K562 (cell line): ENCODE measurements at regions of chr9 and their contacts with region 1.

Region 1: GRCh38 chr9:112333639-112334431 is 416 bp upstream of the PTBP3 start:
- DNase-seq: peak; percentile 96 to 98 (median 97)
- ATAC-seq: peak; percentile 79
- H3K4me3 ChIP-seq: peak overlapping the region; percentile 90
- H3K27ac ChIP-seq: peak overlapping the region; percentile 96
- H3K4me1 ChIP-seq: peaks cover 2 to 7% of the 10 kb centered on the region in 2 experiments; a peak in 3 of 5 replicates
- H3K27me3 ChIP-seq: no peaks in the 10 kb centered on the region
- CTCF ChIP-seq: peak; percentile 54 to 74 (median 57); a peak in 5 of 6 replicates
- EP300 ChIP-seq: 0 out of 2 replicates have a peak, but pooled peaks have one; percentile 3
- POLR2A ChIP-seq: no peak; the same call in none of the 2 replicates
- RAD21 ChIP-seq: peak; percentile 37 to 47

Region 2: GRCh38 chr9:112002131-112002846 is 331.5 kb before region 1 on chr9:
- CTCF ChIA-PET with region 1: no interaction called
- POLR2A ChIA-PET with region 1: no interaction called
- in situ Hi-C with region 1: no loop called
- intact Hi-C with region 1: loop called (anchors 10 kb)
- DNase-seq: no peak
- ATAC-seq: no peak
- H3K4me3 ChIP-seq: no peak overlapping the region
- H3K27ac ChIP-seq: no peak overlapping the region
- H3K4me1 ChIP-seq: peaks cover 3% of the 10 kb centered on the region in 2 experiments; a peak in 2 of 5 replicates
- H3K27me3 ChIP-seq: no peaks in the 10 kb centered on the region
- CTCF ChIP-seq: no peak
- EP300 ChIP-seq: no peak
- POLR2A ChIP-seq: no peak
- RAD21 ChIP-seq: no peak

Region 3: DNA sequence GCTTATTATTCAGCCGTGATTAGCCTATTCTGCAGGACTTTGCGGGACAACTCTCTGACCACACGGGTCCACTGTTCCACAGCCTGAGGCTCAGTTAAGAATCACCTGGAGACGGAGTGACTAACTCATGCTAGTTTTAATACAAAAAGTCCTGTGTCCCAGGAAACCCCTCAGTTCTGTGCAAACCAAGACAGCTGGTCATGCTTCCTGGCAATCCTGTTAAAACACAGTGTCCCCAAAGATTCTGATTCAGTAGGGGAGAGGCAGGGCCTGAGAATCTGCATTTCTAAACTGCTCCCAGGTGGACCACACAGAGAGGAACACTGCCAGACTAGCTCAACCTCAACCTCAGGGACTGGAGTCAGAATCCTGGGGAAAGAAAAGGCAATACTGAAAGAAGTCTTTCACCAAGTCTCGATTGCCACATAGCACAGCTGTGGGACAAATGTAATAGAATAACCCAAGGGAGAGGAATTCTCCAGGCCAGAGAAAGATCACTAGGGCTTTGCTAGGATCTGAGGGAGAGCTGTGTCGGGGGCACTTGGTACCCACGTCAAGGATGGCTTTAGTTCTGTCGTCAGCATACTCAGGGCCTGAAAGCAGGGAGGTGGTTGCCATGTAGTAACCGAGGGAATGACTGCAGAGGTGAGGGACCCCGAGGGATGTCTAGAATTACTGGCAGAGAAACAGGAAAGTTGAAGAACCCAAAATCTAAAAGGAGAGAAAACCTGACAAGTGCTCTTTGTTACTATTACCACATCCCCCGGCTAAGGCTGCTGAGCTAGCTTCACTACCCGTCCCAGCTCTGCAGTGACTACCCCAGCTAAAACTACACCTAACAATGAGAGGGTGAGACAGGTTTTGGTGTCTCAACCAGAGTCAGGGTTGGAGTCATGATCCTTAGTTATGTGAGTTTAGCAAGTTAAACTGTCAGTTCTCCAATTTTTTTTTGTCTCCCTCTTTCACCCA is 167.4 kb before region 1 on chr9:
- CTCF ChIA-PET with region 1: no interaction called
- POLR2A ChIA-PET with region 1: no interaction called
- in situ Hi-C with region 1: no loop called
- intact Hi-C with region 1: loop called (anchors 2 kb)
- DNase-seq: peak in 2 of 4 experiments; percentile 39 to 60
- ATAC-seq: peak; percentile 78
- H3K4me3 ChIP-seq: no peak overlapping the region
- H3K27ac ChIP-seq: peak overlapping the region; percentile 39; the same call in 1 of the 3 replicates
- H3K4me1 ChIP-seq: peaks cover 3 to 32% of the 10 kb centered on the region in 2 experiments
- H3K27me3 ChIP-seq: no peaks in the 10 kb centered on the region
- CTCF ChIP-seq: peak; percentile 49 to 67 (median 50); a peak in 5 of 6 replicates
- EP300 ChIP-seq: no peak
- POLR2A ChIP-seq: no peak
- RAD21 ChIP-seq: peak; percentile 38 to 61; a peak in 3 of 4 replicates

Region 4: GRCh38 chr9:112271466-112272092 is 62.3 kb before region 1 on chr9:
- CTCF ChIA-PET with region 1: no interaction called
- POLR2A ChIA-PET with region 1: interaction called, 3 read pairs
- in situ Hi-C with region 1: no loop called
- intact Hi-C with region 1: loop called (anchors 5 kb)
- DNase-seq: no peak
- ATAC-seq: no peak
- H3K4me3 ChIP-seq: no peak overlapping the region
- H3K27ac ChIP-seq: no peak overlapping the region
- H3K4me1 ChIP-seq: no peaks in the 10 kb centered on the region; a peak in 1 of 5 replicates
- H3K27me3 ChIP-seq: no peaks in the 10 kb centered on the region
- CTCF ChIP-seq: no peak
- EP300 ChIP-seq: no peak
- POLR2A ChIP-seq: no peak
- RAD21 ChIP-seq: no peak

Region 5: GRCh38 chr9:112379177-112380101 is 45.6 kb after region 1 on chr9:
- CTCF ChIA-PET with region 1: no interaction called
- POLR2A ChIA-PET with region 1: interaction called, 11 read pairs
- in situ Hi-C with region 1: no loop called
- intact Hi-C with region 1: no loop called
- DNase-seq: peak; percentile 98 to 99 (median 98)
- ATAC-seq: peak; percentile 91
- H3K4me3 ChIP-seq: peak overlapping the region; percentile 80
- H3K27ac ChIP-seq: peak overlapping the region; percentile 93
- H3K4me1 ChIP-seq: peaks cover 14 to 25% of the 10 kb centered on the region in 2 experiments
- H3K27me3 ChIP-seq: no peaks in the 10 kb centered on the region
- CTCF ChIP-seq: peak in 2 of 3 experiments; percentile 17 to 18; a peak in 2 of 6 replicates
- EP300 ChIP-seq: no peak; the same call in none of the 2 replicates
- POLR2A ChIP-seq: peak; percentile 98
- RAD21 ChIP-seq: 0 out of 4 replicates have a peak, but pooled peaks of 1 of the 2 experiments have one; percentile 25

Region 6: DNA sequence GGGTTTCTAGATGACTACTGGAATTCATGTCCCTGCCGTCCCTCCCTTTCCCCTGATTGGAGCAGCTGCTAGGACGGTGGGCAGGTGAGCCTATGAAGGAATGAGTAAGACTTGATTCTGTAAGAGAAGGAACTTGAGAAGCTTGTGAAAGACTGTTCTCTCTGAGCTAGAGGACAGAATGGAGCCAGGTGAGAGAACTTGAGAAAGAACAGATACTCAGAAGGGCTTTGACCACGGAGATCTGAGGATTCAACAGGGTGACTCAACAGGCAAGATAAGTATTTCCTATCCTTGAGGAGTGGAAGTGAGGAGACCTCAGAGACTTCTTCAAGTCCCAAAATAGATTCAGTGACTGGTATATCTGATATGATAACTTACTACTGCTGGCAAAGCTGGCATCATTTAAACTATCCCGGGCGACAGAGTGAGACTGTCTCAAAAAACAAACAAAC is 88.0 kb after region 1 on chr9:
- CTCF ChIA-PET with region 1: no interaction called
- POLR2A ChIA-PET with region 1: no interaction called
- in situ Hi-C with region 1: no loop called
- intact Hi-C with region 1: no loop called
- DNase-seq: peak; percentile 34 to 79 (median 56)
- ATAC-seq: peak; percentile 82
- H3K4me3 ChIP-seq: no peak overlapping the region
- H3K27ac ChIP-seq: peak overlapping the region; percentile 14
- H3K4me1 ChIP-seq: peaks cover 15 to 28% of the 10 kb centered on the region in 2 experiments; a peak in 4 of 5 replicates
- H3K27me3 ChIP-seq: no peaks in the 10 kb centered on the region
- CTCF ChIP-seq: 0 out of 6 replicates have a peak, but pooled peaks of 1 of the 3 experiments have one; percentile 22
- EP300 ChIP-seq: peak; percentile 26; the same call in 1 of the 2 replicates
- POLR2A ChIP-seq: no peak
- RAD21 ChIP-seq: no peak